ENCODE measurements at regions of chr2 and their contacts with region 1.

Region 1: GRCh38 chr2:175203621-175204496 is 22.3 kb upstream of the ATP5MC3 start:
- DNase-seq: no peak
- H3K4me3 ChIP-seq: no peak overlapping the region
- H3K27ac ChIP-seq: no peak overlapping the region
- H3K4me1 ChIP-seq: peaks cover 20% of the 10 kb centered on the region
- H3K27me3 ChIP-seq: no peaks in the 10 kb centered on the region
- CTCF ChIP-seq: peak; percentile 65

Region 2: GRCh38 chr2:175275539-175275938 is 71.7 kb after region 1 on chr2:
- intact Hi-C with region 1: loop called (anchors 10 kb)
- DNase-seq: no peak
- H3K4me3 ChIP-seq: no peak overlapping the region
- H3K27ac ChIP-seq: no peak overlapping the region
- H3K4me1 ChIP-seq: peaks cover 9% of the 10 kb centered on the region
- H3K27me3 ChIP-seq: peaks cover 3% of the 10 kb centered on the region
- CTCF ChIP-seq: no peak

Measured in left ventricle myocardium inferior (tissue), 1 donor.